Activated B cell treated with CpG ODN at 0.5 μM for 24 hours (primary cell): ENCODE measurements at regions of chr11 and their contacts with region 1.

Region 1: GRCh38 chr11:66638177-66639065 is at the start of gene RBM4:
- DNase-seq: peak; percentile 78
- ATAC-seq: peak; percentile 95
- H3K4me3 Mint-ChIP-seq: peak within 1 kb of the TSS; percentile 99
- H3K27ac Mint-ChIP-seq: peak within 1 kb of the TSS; percentile 98
- H3K4me1 Mint-ChIP-seq: peaks cover 67% of the 10 kb centered on the region
- H3K27me3 Mint-ChIP-seq: no peaks in the 10 kb centered on the region
- CTCF ChIP-seq: no peak
- total RNA-seq, gene RBM4: 197 and 202 TPM in 2 replicates

Region 2: DNA sequence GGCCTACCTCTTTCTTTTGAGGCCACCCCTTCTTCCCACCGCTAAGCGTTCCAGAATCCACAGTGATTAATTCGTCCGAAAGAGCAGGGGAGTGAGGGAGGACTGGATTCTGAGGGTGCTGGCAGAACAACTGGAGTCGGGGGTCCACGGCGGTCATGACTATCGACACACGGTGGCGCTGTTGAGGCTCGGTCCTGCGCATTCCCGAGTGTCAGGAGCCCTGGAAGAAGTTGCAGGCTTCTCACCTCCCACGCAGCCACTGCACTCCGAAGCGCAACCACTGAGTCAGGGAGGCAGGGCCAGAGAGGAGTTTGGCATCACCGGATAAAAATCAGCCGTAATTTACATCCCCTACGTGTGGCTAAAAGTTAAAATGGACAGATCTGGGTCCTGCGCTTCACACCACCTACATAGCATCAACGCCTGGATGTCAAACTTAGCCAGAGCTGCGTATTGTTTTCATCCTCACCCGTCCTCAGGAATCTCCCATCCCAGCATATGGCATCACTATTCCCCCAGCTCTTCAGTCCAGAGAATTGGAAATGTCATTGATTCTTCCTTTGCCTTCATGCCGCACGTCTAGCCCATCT is 59.3 kb before region 1 on chr11:
- CTCF ChIA-PET with region 1: interaction called, 5 read pairs
- POLR2A ChIA-PET with region 1: interaction called, 7 read pairs
- intact Hi-C with region 1: loop called (anchors 1 kb)
- DNase-seq: peak; percentile 76
- ATAC-seq: peak; percentile 88
- H3K4me3 Mint-ChIP-seq: no peak overlapping the region
- H3K27ac Mint-ChIP-seq: no peak overlapping the region
- H3K4me1 Mint-ChIP-seq: peaks cover 7% of the 10 kb centered on the region
- H3K27me3 Mint-ChIP-seq: peaks cover 13% of the 10 kb centered on the region
- CTCF ChIP-seq: peak; percentile 42

Region 3: GRCh38 chr11:66607126-66607834 is 31.1 kb before region 1 on chr11:
- CTCF ChIA-PET with region 1: interaction called, 9 read pairs
- POLR2A ChIA-PET with region 1: interaction called, 73 read pairs
- intact Hi-C with region 1: loop called (anchors 1 kb)
- DNase-seq: no peak
- ATAC-seq: no peak
- H3K4me3 Mint-ChIP-seq: no peak overlapping the region
- H3K27ac Mint-ChIP-seq: peak overlapping the region; percentile 80
- H3K4me1 Mint-ChIP-seq: peaks cover 42% of the 10 kb centered on the region
- H3K27me3 Mint-ChIP-seq: no peaks in the 10 kb centered on the region
- CTCF ChIP-seq: no peak

Region 4: DNA sequence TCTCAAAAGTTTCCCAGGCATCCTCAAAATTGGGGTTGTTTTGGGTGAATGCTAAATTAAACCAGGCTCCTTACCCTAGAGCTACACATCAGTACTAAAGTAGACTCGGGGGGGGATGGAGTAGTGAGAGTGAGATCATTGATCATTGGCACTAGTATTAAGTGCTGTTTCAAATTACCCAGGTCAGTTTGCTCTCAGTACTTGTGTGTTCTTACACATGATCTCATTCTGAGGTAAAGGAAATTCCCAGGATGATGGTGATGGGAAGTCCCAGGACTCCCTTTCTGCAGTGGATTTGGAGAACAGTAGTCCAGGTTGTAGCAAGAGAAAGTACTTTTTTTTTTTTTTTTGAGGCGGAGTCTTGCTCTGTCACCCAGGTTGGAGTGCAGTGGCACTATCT is 12.6 kb after region 1 on chr11:
- CTCF ChIA-PET with region 1: no interaction called
- POLR2A ChIA-PET with region 1: interaction called, 25 read pairs
- intact Hi-C with region 1: no loop called
- DNase-seq: no peak
- ATAC-seq: no peak
- H3K4me3 Mint-ChIP-seq: no peak overlapping the region
- H3K27ac Mint-ChIP-seq: no peak overlapping the region
- H3K4me1 Mint-ChIP-seq: peaks cover 32% of the 10 kb centered on the region
- H3K27me3 Mint-ChIP-seq: no peaks in the 10 kb centered on the region
- CTCF ChIP-seq: no peak

Region 5: GRCh38 chr11:66842896-66843775 is 204.7 kb after region 1 on chr11 and contains the start of gene RCE1:
- CTCF ChIA-PET with region 1: no interaction called
- POLR2A ChIA-PET with region 1: interaction called, 19 read pairs
- intact Hi-C with region 1: no loop called
- DNase-seq: peak; percentile 93
- ATAC-seq: peak; percentile 91
- H3K4me3 Mint-ChIP-seq: peak within 1 kb of the TSS; percentile 92
- H3K27ac Mint-ChIP-seq: peak within 1 kb of the TSS; percentile 90
- H3K4me1 Mint-ChIP-seq: peaks cover 45% of the 10 kb centered on the region
- H3K27me3 Mint-ChIP-seq: no peaks in the 10 kb centered on the region
- CTCF ChIP-seq: no peak
- total RNA-seq, gene RCE1: 20.1 and 21.4 TPM in 2 replicates